B cell (primary cell): ENCODE measurements at regions of chr16 and their contacts with region 1.

Region 1: DNA sequence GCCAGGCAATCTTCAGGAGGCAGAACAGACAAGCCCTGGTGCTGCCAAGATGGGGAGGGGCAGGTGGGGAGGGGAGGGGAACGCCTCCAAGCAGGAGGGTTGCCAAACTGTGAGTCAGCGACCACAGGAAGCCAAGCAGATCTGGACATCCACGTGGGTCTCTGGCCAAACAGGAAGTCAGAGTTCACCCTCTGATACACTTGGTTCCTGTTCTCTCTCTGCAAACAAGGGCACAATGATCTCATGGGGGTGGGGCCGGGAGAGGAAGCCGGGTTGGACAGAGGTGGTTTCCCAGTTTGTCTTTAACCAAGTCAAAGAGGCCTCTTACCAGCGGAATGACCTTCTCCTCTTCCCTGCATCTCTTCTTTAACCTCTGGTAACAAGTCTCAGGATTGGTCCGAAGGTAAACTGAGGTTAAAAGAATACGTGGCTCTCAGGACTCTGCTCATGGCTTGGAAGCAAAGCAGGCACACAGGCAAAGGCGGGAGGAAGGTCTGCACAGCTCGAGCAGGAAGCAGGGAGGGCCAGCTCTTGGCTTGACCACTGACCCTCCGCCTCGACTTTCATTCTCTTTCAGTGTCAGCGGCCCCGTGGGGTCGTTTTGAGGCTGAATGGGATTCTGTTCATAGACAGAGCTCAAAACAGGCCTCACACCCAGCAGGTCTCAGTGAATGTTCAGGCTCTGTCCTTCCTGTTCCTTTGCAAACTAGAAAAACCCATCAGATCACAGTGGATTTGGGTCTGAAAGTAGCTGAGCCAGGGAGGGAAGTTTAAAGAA is 32.9 kb downstream of the TK2 start:
- DNase-seq: peak; percentile 94
- ATAC-seq: peak; percentile 89
- H3K4me3 ChIP-seq: peak overlapping the region; percentile 41 to 62 (median 53)
- H3K4me3 Mint-ChIP-seq: peak overlapping the region; percentile 96
- H3K27ac ChIP-seq: peak overlapping the region; percentile 94 to 97
- H3K27ac Mint-ChIP-seq: peak overlapping the region; percentile 99
- H3K4me1 ChIP-seq: peaks cover 59 to 63% of the 10 kb centered on the region in 2 donors
- H3K4me1 Mint-ChIP-seq: peaks cover 72% of the 10 kb centered on the region
- H3K27me3 ChIP-seq: peaks cover 0 to 3% (median 0%) of the 10 kb centered on the region in 4 experiments
- H3K27me3 Mint-ChIP-seq: peaks cover under 1% of the 10 kb centered on the region
- CTCF ChIP-seq: no peak

Region 2: GRCh38 chr16:66483689-66484481 is 33.1 kb before region 1 on chr16:
- CTCF ChIA-PET with region 1: interaction called, 9 read pairs
- POLR2A ChIA-PET with region 1: no interaction called
- intact Hi-C with region 1: loop called (anchors 1 kb)
- DNase-seq: peak; percentile 81
- ATAC-seq: peak; percentile 93
- H3K4me3 ChIP-seq: no peak overlapping the region
- H3K4me3 Mint-ChIP-seq: no peak overlapping the region
- H3K27ac ChIP-seq: no peak overlapping the region
- H3K27ac Mint-ChIP-seq: peak overlapping the region; percentile 5
- H3K4me1 ChIP-seq: peaks cover 14 to 20% of the 10 kb centered on the region in 2 donors
- H3K4me1 Mint-ChIP-seq: peaks cover 15% of the 10 kb centered on the region
- H3K27me3 ChIP-seq: peaks cover 0 to 9% (median under 1%) of the 10 kb centered on the region in 4 experiments
- H3K27me3 Mint-ChIP-seq: peaks cover 3% of the 10 kb centered on the region
- CTCF ChIP-seq: peak; percentile 96